WTC11 (cell line): ENCODE measurements at regions of chr4 and their contacts with region 1.

Region 1: GRCh38 chr4:6200011-6200921 is at the start of gene JAKMIP1:
- DNase-seq: peak; percentile 93
- ATAC-seq: peak; percentile 50
- H3K4me3 Mint-ChIP-seq: peak within 1 kb of the TSS; percentile 67
- H3K27ac Mint-ChIP-seq: no peak within 1 kb of the TSS
- H3K4me1 Mint-ChIP-seq: peaks cover 37% of the 10 kb centered on the region
- H3K27me3 Mint-ChIP-seq: peaks cover 41% of the 10 kb centered on the region
- CTCF ChIP-seq: no peak
- total RNA-seq, gene JAKMIP1: 4.0 to 5.6 TPM (median 5.4 TPM) in 3 replicates

Region 2: GRCh38 chr4:6134612-6135220 is 65.5 kb before region 1 on chr4:
- CTCF ChIA-PET with region 1: interaction called, 10 read pairs
- POLR2A ChIA-PET with region 1: no interaction called
- DNase-seq: no peak
- ATAC-seq: peak; percentile 77
- H3K4me3 Mint-ChIP-seq: no peak overlapping the region
- H3K27ac Mint-ChIP-seq: no peak overlapping the region
- H3K4me1 Mint-ChIP-seq: peaks cover 21% of the 10 kb centered on the region
- H3K27me3 Mint-ChIP-seq: no peaks in the 10 kb centered on the region; the same call in 1 of the 2 replicates
- CTCF ChIP-seq: no peak